Naive thymus-derived CD4-positive, alpha-beta T cell (primary cell): ENCODE measurements at regions of chr17 and their contacts with region 1.

Region 1: DNA sequence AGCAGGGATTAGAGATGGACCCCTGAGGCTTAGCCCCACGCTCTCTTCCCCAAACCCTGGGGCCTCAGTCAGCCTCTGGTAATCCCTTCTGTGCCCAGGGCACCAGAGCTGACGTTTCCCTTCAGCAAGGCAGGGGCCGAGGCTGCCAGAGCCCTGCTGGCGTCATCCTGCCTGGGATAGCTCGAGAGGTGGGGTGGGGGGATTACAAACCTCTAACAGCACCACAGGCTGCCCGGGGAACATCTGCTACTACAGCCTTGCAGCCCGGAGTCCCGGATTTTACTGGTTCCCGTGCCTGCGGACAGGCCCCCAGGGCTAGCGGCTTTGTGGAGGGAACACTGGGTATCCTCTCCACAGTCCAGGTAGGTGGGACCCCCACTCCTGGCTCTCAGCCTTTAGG is at the start of gene AANAT:
- DNase-seq: no peak
- ATAC-seq: no peak
- H3K4me3 ChIP-seq: no peak within 1 kb of the TSS
- H3K4me3 Mint-ChIP-seq: no peak within 1 kb of the TSS
- H3K27ac ChIP-seq: no peak within 1 kb of the TSS
- H3K27ac Mint-ChIP-seq: peak within 1 kb of the TSS in 1 of 9 donors; percentile 63
- H3K4me1 ChIP-seq: no peaks in the 10 kb centered on the region
- H3K4me1 Mint-ChIP-seq: peaks cover 0 to 9% (median 4%) of the 10 kb centered on the region in 7 donors
- H3K27me3 ChIP-seq: no peaks in the 10 kb centered on the region
- H3K27me3 Mint-ChIP-seq: peaks cover 0 to 4% (median 0%) of the 10 kb centered on the region in 5 donors
- total RNA-seq, gene AANAT: not detected

Region 2: GRCh38 chr17:76492989-76493501 is 25.7 kb after region 1 on chr17:
- CTCF ChIA-PET with region 1: interaction called, 6 read pairs
- POLR2A ChIA-PET with region 1: no interaction called
- intact Hi-C with region 1: loop called in 1 of 2 experiments (anchors 2 kb)
- DNase-seq: peak in 2 of 9 donors; percentile 22 to 70
- ATAC-seq: peak; percentile 84
- H3K4me3 ChIP-seq: peak overlapping the region; percentile 65
- H3K4me3 Mint-ChIP-seq: peak overlapping the region; percentile 72 to 92 (median 82)
- H3K27ac ChIP-seq: peak overlapping the region; percentile 0
- H3K27ac Mint-ChIP-seq: peak overlapping the region; percentile 44 to 99 (median 76)
- H3K4me1 ChIP-seq: peaks cover 32 to 47% of the 10 kb centered on the region in 2 donors
- H3K4me1 Mint-ChIP-seq: peaks cover 12 to 76% (median 32%) of the 10 kb centered on the region in 7 donors
- H3K27me3 ChIP-seq: no peaks in the 10 kb centered on the region
- H3K27me3 Mint-ChIP-seq: no peaks in the 10 kb centered on the region

Region 3: GRCh38 chr17:76506408-76507349 is 39.3 kb after region 1 on chr17:
- CTCF ChIA-PET with region 1: interaction called, 45 read pairs
- POLR2A ChIA-PET with region 1: interaction called, 5 read pairs
- intact Hi-C with region 1: loop called (anchors 1 kb)
- DNase-seq: peak; percentile 74 to 94 (median 86)
- ATAC-seq: peak; percentile 88
- H3K4me3 ChIP-seq: no peak overlapping the region
- H3K4me3 Mint-ChIP-seq: no peak overlapping the region
- H3K27ac ChIP-seq: no peak overlapping the region
- H3K27ac Mint-ChIP-seq: peak overlapping the region in 6 of 9 donors; percentile 5 to 60 (median 42)
- H3K4me1 ChIP-seq: peaks cover 13 to 21% of the 10 kb centered on the region in 2 donors
- H3K4me1 Mint-ChIP-seq: peaks cover 5 to 45% (median 10%) of the 10 kb centered on the region in 7 donors
- H3K27me3 ChIP-seq: no peaks in the 10 kb centered on the region
- H3K27me3 Mint-ChIP-seq: peaks cover 0 to 13% (median 0%) of the 10 kb centered on the region in 5 donors

Region 4: GRCh38 chr17:76623271-76624146 is 156.1 kb after region 1 on chr17:
- CTCF ChIA-PET with region 1: no interaction called
- POLR2A ChIA-PET with region 1: no interaction called
- intact Hi-C with region 1: loop called in 1 of 2 experiments (anchors 1 kb)
- DNase-seq: peak; percentile 46 to 78 (median 70)
- ATAC-seq: peak; percentile 98
- H3K4me3 ChIP-seq: no peak overlapping the region
- H3K4me3 Mint-ChIP-seq: peak overlapping the region in 1 of 10 donors; percentile 23
- H3K27ac ChIP-seq: no peak overlapping the region
- H3K27ac Mint-ChIP-seq: no peak overlapping the region
- H3K4me1 ChIP-seq: peaks cover 0 to 3% of the 10 kb centered on the region in 2 donors
- H3K4me1 Mint-ChIP-seq: peaks cover 0 to 8% (median 5%) of the 10 kb centered on the region in 7 donors
- H3K27me3 ChIP-seq: no peaks in the 10 kb centered on the region
- H3K27me3 Mint-ChIP-seq: peaks cover 0 to 23% (median 0%) of the 10 kb centered on the region in 5 donors